Heart left ventricle (tissue), 16 donors: ENCODE measurements at regions of chr1 and their contacts with region 1.

Region 1: DNA sequence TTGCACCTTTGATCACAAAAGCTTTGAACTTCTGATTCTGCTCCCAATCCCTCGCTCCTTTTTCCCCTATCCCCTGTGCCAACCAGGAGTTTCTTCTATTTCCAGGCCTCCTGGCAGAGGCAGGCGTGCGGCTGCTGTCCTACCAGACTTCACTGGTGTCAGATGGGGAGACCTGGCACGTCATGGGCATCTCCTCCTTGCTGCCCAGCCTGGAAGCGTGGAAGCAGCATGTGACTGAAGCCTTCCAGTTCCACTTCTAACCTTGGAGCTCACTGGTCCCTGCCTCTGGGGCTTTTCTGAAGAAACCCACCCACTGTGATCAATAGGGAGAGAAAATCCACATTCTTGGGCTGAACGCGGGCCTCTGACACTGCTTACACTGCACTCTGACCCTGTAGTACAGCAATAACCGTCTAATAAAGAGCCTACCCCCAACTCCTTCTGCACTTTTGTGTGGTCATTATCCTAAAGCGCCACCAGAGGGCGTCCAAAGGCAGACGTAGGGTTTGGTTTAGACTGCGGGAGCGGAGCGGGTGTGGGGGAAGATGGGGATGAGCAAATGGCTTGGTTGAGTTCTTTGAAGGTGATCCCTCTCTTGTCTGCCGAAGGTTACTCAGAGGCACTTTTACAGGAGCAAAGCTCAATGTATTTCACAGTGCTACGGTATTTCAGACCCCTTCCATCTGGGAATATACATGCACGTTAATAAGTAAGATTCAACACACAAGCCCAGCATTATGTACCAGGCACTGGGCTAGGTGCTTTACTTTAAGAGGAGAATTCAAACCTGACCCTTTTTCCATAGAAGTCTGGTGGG is 24.7 kb downstream of the HMGCS2 start:
- DNase-seq: peak in 4 of 5 donors; percentile 41 to 67 (median 62)
- ATAC-seq: peak; percentile 30 to 66 (median 56)
- H3K4me3 ChIP-seq: no peak overlapping the region
- H3K27ac ChIP-seq: peak overlapping the region in 3 of 12 donors; percentile 24 to 62 (median 34)
- H3K4me1 ChIP-seq: peaks cover 0 to 26% (median 11%) of the 10 kb centered on the region in 12 donors
- H3K27me3 ChIP-seq: no peaks in the 10 kb centered on the region
- CTCF ChIP-seq: peak; percentile 69 to 86 (median 80)
- POLR2A ChIP-seq: no peak

Region 2: DNA sequence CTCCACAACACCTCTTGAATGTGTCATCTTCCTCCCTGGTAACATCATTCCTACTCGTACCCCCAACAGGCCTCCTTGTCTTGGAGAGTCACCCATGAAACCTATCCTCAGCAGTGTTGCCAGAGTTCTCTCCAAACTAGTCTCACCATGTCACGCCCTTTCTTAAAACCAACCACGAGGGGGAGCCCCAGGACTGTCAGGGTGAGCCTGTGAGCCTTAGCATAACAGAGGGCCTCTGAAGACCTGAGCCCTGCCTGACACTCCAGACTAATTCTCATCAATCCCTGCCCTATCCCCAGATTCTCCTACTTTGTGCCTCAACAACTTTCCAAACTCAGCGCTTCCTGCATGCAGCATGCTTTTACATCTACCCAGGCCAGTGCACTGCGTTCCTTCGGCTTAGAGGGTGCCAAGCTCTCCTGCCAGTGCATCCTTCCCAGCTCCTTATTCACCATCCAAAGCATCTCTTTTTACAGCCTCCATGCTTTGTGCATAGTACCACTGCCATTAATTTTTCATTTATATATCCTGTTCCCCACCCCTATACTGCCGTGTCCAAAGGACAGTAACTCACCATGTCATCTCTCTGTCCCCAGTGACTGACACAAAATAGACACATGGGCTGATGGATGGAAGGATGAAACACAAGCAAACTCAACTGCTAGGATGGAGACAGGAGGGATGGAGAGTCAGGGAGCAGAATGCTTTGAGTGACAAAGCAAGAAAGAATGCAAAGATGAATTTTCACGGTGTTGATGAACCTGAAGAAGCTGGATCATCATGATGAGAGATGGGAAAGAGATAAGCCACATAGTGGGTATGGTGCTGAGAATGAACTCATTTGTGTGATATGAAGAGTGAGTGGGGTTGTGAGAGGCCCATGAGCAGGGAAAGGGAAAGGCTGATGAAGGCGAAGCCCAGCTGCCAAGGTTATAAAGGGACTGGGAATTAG is 129.9 kb before region 1 on chr1:
- intact Hi-C with region 1: no loop called
- DNase-seq: peak; percentile 82 to 88 (median 86)
- ATAC-seq: peak; percentile 84 to 94 (median 90)
- H3K4me3 ChIP-seq: no peak overlapping the region
- H3K27ac ChIP-seq: no peak overlapping the region
- H3K4me1 ChIP-seq: peaks cover 0 to 36% (median 14%) of the 10 kb centered on the region in 12 donors
- H3K27me3 ChIP-seq: no peaks in the 10 kb centered on the region
- CTCF ChIP-seq: peak; percentile 66 to 92 (median 88)
- POLR2A ChIP-seq: no peak

Region 3: DNA sequence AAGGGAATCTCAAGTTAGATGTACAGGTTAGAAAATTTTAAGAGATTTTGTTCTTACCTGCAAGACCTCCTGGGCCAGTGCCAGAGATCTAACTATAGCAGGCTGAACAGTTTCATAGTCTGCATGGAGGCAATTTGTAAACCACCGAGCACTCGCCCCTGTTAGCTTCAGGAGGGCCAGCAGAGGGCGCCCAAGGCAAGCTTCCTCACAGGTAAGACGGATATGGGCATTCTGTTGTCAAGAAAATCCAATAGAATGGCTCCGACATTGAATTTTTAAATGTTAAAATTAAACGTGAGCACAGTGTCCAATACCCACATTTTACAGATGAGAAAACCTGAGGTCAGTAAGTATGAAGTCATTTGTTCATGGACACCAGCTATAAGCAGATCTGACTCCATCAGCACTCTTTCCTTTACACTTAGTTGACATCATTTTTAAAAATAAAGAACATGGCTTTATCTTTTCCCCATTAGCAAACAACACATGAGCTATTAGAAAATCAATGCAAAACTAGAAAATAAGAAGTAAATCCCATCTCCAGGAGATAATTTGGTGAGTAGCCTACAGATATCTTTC is 65.1 kb after region 1 on chr1:
- intact Hi-C with region 1: loop called in 5 of 10 experiments (anchors 2 to 10 kb)
- DNase-seq: peak; percentile 51 to 74 (median 68)
- ATAC-seq: peak in 3 of 4 donors; percentile 72 to 85 (median 81)
- H3K4me3 ChIP-seq: no peak overlapping the region
- H3K27ac ChIP-seq: no peak overlapping the region
- H3K4me1 ChIP-seq: no peaks in the 10 kb centered on the region
- H3K27me3 ChIP-seq: peaks cover 0 to 19% (median 0%) of the 10 kb centered on the region in 9 donors
- CTCF ChIP-seq: peak; percentile 70 to 94 (median 83)
- POLR2A ChIP-seq: no peak

Region 4: DNA sequence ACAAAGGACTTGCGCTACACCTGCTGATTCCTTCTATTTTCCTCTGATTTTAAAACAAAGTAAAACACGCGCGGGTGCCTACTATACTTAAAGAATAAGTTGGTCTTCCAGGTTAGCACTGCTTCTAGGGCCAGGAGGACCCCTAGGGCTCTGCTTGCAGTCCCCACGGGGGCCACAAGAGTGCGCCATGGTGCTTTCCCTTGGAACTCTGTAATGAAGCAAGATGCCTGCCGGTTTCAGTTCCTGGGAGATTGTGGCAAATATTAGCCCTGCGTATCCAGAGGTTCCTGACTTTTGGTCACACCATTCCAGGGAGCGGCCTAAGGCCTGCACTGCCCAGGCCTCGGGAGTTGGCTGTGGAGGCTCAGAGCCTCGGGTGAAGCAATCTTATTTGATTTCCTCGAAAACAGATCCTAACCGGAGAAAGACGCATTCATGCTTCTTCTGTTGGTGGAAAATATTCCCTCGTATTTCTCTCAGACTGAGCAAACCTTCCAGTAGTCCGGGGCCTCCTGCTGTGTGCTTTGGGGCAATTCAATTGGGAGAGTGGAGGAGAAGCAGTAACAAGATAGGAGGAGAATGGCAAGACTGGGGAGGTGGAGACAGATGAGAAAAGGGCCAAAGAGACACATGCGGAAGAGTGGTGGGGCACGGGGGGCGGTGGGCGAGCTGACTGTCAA is 127.1 kb after region 1 on chr1:
- intact Hi-C with region 1: loop called in 1 of 10 experiments (anchors 10 kb)
- DNase-seq: peak; percentile 61 to 84 (median 71)
- ATAC-seq: peak; percentile 60 to 87 (median 74)
- H3K4me3 ChIP-seq: peak overlapping the region in 5 of 12 donors; percentile 4 to 48 (median 39)
- H3K27ac ChIP-seq: peak overlapping the region in 1 of 12 donors; percentile 35
- H3K4me1 ChIP-seq: peaks cover 0 to 15% (median 0%) of the 10 kb centered on the region in 12 donors
- H3K27me3 ChIP-seq: no peaks in the 10 kb centered on the region
- CTCF ChIP-seq: peak; percentile 70 to 94 (median 84)
- POLR2A ChIP-seq: no peak